PC-9 (cell line): ENCODE measurements at regions of chr19 and their contacts with region 1.

Region 1: DNA sequence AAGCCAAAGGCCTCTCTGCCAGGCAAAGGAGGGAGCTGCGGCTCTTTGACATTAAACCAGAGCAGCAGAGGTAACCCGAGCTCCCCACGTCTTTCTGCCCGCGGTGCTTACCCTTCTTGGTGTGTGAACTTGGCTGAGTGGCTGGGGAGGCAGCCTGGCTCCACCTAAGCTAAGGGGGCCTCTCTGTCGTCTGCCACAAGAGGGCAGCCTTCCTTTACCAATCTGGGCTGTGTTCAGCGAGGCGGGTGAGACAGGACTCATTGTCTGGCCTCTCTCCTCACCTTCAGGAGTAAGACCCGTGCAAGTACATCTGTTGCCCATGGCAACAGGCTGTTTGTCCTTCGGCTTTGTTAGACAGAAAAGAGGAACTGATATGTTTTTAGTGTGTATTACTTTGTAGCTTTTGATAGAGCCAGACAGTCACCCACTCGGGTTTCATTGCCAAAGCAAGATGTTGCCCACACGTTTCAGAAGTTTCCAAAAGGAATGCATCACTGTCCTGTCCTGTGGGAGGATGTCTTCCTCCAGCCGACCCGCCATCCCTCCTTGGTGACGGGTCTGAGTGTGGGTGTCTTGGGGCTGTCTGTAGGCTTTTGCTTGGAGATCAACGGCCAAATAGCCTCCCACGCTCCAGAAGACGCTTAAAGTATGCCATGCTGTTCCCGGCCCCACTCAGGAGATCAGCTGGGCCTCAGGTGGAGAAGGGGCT is 4.6 kb downstream of the POP4 start:
- DNase-seq: peak; percentile 71 to 72
- H3K4me3 ChIP-seq: no peak overlapping the region
- H3K27ac ChIP-seq: no peak overlapping the region
- H3K4me1 ChIP-seq: peaks cover 7% of the 10 kb centered on the region
- H3K27me3 ChIP-seq: no peaks in the 10 kb centered on the region
- CTCF ChIP-seq: peak; percentile 88

Region 2: GRCh38 chr19:28927456-28927855 is 683.3 kb before region 1 on chr19:
- CTCF ChIA-PET with region 1: interaction called, 12 read pairs
- POLR2A ChIA-PET with region 1: no interaction called
- intact Hi-C with region 1: no loop called
- DNase-seq: no peak
- H3K4me3 ChIP-seq: no peak overlapping the region
- H3K27ac ChIP-seq: no peak overlapping the region
- H3K4me1 ChIP-seq: no peaks in the 10 kb centered on the region
- H3K27me3 ChIP-seq: peaks cover 30% of the 10 kb centered on the region
- CTCF ChIP-seq: no peak

Region 3: DNA sequence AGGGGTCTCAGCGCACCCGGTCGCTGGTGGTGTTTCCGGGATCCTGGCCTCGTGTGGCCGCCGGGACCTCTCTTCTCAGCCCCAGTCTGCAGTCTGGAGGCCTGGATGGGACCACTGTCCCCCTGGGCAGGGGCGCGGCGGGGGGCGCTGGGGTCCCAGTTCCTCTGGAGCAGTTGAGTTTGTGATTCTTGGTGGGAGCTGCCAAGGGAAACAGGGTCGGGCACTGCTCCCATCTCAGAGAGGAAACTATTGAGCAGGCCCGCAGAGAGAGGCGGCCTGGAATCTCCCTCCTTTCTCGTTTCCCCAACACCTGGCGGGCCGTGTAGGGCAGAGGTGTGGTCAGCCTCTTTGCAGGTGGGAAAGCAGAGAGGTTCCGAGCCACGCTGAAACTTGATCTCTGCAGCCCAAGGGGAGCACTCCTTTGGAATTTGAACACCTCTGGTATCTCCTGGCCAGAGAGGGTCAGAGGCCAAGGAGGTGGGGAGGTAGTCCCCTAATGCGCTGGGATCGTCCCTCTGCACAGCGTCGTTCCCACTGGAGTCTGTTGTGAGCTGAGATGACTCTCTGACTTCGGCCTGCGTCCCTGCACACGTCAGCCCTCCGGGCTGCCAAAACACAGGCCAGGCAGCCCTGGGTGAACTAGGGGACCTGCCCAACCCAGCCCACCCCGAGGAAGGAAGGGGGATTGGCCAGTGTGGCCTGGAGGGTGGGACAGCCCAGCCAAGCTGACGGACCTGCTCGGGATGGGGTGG is 55.3 kb after region 1 on chr19:
- CTCF ChIA-PET with region 1: no interaction called
- POLR2A ChIA-PET with region 1: interaction called, 14 read pairs
- intact Hi-C with region 1: loop called (anchors 2 kb)
- DNase-seq: peak; percentile 76 to 77
- H3K4me3 ChIP-seq: peak overlapping the region; percentile 95
- H3K27ac ChIP-seq: peak overlapping the region; percentile 69
- H3K4me1 ChIP-seq: peaks cover 72% of the 10 kb centered on the region
- H3K27me3 ChIP-seq: no peaks in the 10 kb centered on the region
- CTCF ChIP-seq: no peak

Region 4: DNA sequence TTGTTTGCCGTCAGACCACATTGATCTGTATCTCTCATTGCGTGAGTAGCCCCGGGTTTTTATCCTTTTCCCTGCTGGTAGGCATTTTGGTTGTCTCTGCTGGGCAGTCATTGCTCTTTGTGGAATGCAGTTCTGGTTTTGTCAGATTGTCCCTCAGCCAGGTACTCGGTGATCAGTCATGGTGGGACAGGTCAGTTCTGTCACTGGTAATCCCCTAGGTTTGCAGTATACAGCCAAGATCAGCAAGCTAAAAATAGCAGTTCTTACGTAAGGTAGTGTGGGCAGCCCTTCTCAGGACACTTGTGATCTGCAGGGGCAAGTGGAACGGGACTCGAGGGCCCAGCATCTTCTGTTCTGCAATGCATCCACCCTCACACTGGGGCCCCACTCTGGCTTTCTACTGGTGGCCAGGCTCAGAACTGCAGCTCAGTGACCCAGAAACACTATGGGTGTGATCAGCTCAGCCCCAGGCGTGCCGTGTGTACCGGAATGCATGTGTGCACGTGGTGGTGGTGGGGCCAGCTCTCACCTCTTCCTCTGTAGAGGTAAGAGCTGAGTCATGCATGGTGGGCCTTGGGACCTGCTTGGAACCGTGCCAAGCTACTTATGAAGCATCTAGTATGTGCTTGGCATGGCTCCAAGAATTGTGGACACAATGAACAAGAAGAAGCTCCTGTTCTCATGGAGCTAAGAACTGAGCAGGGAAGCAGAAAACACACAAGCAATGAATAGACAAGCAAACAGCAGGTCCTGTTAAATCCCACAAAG is 60.9 kb after region 1 on chr19:
- CTCF ChIA-PET with region 1: interaction called, 5 read pairs
- POLR2A ChIA-PET with region 1: interaction called, 14 read pairs
- intact Hi-C with region 1: loop called (anchors 2 kb)
- DNase-seq: peak; percentile 82 to 92
- H3K4me3 ChIP-seq: no peak overlapping the region; the same call in 1 of the 2 replicates
- H3K27ac ChIP-seq: peak overlapping the region; percentile 75
- H3K4me1 ChIP-seq: peaks cover 63% of the 10 kb centered on the region
- H3K27me3 ChIP-seq: no peaks in the 10 kb centered on the region
- CTCF ChIP-seq: peak; percentile 58

Region 5: DNA sequence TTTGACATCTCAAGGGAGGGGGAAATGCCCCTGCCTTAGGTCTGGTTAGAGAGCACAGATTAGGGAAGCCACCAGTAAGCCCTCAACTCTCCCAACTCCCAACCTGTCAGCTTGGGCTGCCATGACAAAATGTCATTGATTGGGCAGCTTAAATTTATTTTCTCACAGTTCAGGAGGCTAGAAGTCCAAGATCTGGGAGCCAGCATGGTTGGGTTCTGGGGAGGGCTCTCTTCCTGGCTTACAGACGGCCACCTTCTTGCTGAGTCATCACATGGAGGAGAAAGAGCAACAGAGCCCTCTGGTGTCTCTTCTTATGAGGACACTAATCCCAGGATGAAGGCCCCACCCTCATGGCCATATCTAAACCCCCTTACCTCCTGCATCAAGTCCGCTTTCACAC is 80.1 kb after region 1 on chr19:
- CTCF ChIA-PET with region 1: no interaction called
- POLR2A ChIA-PET with region 1: no interaction called
- intact Hi-C with region 1: loop called (anchors 1 kb)
- DNase-seq: peak; percentile 40 to 53
- H3K4me3 ChIP-seq: no peak overlapping the region
- H3K27ac ChIP-seq: peak overlapping the region; percentile 57; the same call in 1 of the 2 replicates
- H3K4me1 ChIP-seq: peaks cover 20% of the 10 kb centered on the region
- H3K27me3 ChIP-seq: no peaks in the 10 kb centered on the region
- CTCF ChIP-seq: peak; percentile 85

Region 6: GRCh38 chr19:29714953-29715700 is 104.4 kb after region 1 on chr19 and contains the start of gene C19orf12:
- CTCF ChIA-PET with region 1: interaction called, 19 read pairs
- POLR2A ChIA-PET with region 1: interaction called, 4 read pairs
- intact Hi-C with region 1: loop called (anchors 1 kb)
- DNase-seq: peak in 1 of 2 experiments; percentile 62
- H3K4me3 ChIP-seq: peak within 1 kb of the TSS; percentile 92
- H3K27ac ChIP-seq: peak within 1 kb of the TSS; percentile 66
- H3K4me1 ChIP-seq: peaks cover 7% of the 10 kb centered on the region
- H3K27me3 ChIP-seq: no peaks in the 10 kb centered on the region
- CTCF ChIP-seq: no peak
- total RNA-seq, gene C19orf12: 14.8 and 15.4 TPM in 2 replicates